Left cardiac atrium (tissue), 4 donors: ENCODE measurements at regions of chr22 and their contacts with region 1.

Region 1: DNA sequence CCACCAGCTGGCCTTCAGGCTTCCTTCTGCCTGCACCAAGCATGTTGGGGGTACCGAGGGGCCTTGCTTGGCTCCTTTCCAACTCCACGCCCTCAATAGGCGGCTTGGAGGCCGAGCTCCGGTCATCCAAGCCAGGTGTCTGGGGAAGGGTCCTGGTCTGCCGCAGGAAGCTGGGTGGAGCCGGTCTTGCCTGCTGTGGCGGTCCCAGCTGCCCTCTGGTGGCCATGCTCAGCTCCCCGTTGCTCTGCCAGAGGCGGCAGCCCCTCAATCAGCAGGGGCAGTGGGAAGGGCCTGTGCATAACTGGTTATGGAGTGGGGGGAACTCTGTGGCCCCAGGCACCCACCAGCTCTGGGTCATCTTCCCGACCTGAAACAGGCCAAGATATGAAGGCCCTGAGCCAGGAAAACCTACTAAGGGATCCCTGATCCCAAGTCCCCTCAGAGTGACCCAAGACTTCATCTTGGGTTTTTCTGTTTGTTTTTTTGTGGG is 3.2 kb downstream of the ARVCF start:
- DNase-seq: peak; percentile 81
- ATAC-seq: peak; percentile 36 to 46

Region 2: GRCh38 chr22:19970479-19971275 is 42.8 kb before region 1 on chr22:
- intact Hi-C with region 1: loop called (anchors 1 to 2 kb)
- DNase-seq: peak; percentile 74
- ATAC-seq: peak; percentile 61 to 81

Region 3: GRCh38 chr22:19995626-19996335 is 17.6 kb before region 1 on chr22:
- intact Hi-C with region 1: no loop called
- DNase-seq: no peak
- ATAC-seq: peak; percentile 17 to 60

Region 4: GRCh38 chr22:20066617-20067383 is 53.4 kb after region 1 on chr22:
- intact Hi-C with region 1: no loop called
- DNase-seq: no peak
- ATAC-seq: no peak